Left colon (tissue), 2 donors: ENCODE measurements at regions of chr6 and their contacts with region 1.

Region 1: GRCh38 chr6:3045369-3045768 is 22.9 kb upstream of the RIPK1 start:
- DNase-seq: no peak
- ATAC-seq: no peak

Region 2: GRCh38 chr6:3013479-3013878 is 31.9 kb before region 1 on chr6:
- intact Hi-C with region 1: loop called in 1 of 2 experiments (anchors 5 kb)
- DNase-seq: no peak
- ATAC-seq: peak; percentile 44